ENCODE measurements at regions of chr6 and their contacts with region 1.

Region 1: GRCh38 chr6:24991810-24992467 is 56.2 kb upstream of the RIPOR2 start:
- DNase-seq: peak; percentile 61
- ATAC-seq: peak; percentile 88
- H3K4me3 Mint-ChIP-seq: no peak overlapping the region
- H3K27ac Mint-ChIP-seq: no peak overlapping the region
- H3K4me1 Mint-ChIP-seq: peaks cover 14% of the 10 kb centered on the region
- H3K27me3 Mint-ChIP-seq: peaks cover 2% of the 10 kb centered on the region; the same call in 1 of the 2 replicates
- CTCF ChIP-seq: peak; percentile 83

Region 2: DNA sequence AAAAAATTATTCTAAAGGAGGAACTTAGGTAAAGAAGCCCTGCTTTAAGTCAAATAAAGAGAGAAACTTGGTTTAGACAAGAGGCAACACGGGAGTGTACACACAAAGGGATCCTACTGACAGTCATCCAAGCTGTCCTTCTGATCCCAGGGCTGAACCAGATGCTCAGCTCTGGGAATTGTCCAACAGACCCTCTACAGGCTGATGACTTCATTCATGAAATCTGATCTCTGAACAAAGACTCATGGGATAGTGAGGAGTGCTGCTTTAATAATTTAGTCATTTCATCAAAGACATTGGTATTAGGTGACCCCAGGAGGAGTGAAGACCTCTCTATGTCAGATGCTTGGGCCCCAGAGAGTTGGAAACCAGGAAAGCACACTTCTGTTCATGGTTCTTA is 127.6 kb before region 1 on chr6:
- CTCF ChIA-PET with region 1: interaction called, 10 read pairs
- POLR2A ChIA-PET with region 1: no interaction called
- DNase-seq: no peak
- ATAC-seq: no peak
- H3K4me3 Mint-ChIP-seq: no peak overlapping the region
- H3K27ac Mint-ChIP-seq: no peak overlapping the region
- H3K4me1 Mint-ChIP-seq: peaks cover 8% of the 10 kb centered on the region
- H3K27me3 Mint-ChIP-seq: no peaks in the 10 kb centered on the region
- CTCF ChIP-seq: no peak

Region 3: DNA sequence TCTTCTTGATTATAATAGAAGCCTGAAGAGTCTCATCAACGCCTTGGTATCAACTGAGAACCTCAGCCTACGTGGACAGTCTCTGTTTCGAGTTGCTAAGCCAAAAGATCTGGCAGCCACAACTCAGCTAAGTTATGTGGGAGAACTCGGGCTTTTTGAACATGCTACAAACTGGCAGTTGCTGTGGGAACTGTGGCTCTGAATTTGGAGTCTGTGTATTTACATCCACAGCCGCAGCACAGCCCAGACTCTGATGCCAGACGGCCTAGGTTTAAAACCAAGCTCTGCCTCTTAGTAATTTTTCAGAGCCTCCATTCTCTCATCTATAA is 92.0 kb before region 1 on chr6:
- CTCF ChIA-PET with region 1: interaction called, 18 read pairs
- POLR2A ChIA-PET with region 1: no interaction called
- DNase-seq: no peak
- ATAC-seq: no peak
- H3K4me3 Mint-ChIP-seq: no peak overlapping the region
- H3K27ac Mint-ChIP-seq: no peak overlapping the region
- H3K4me1 Mint-ChIP-seq: peaks cover 23% of the 10 kb centered on the region
- H3K27me3 Mint-ChIP-seq: no peaks in the 10 kb centered on the region
- CTCF ChIP-seq: no peak

Region 4: GRCh38 chr6:24919004-24919892 is 72.7 kb before region 1 on chr6:
- CTCF ChIA-PET with region 1: interaction called, 27 read pairs
- POLR2A ChIA-PET with region 1: no interaction called
- DNase-seq: peak; percentile 18
- ATAC-seq: peak; percentile 32
- H3K4me3 Mint-ChIP-seq: no peak overlapping the region
- H3K27ac Mint-ChIP-seq: peak overlapping the region; percentile 80
- H3K4me1 Mint-ChIP-seq: peaks cover 50% of the 10 kb centered on the region
- H3K27me3 Mint-ChIP-seq: no peaks in the 10 kb centered on the region
- CTCF ChIP-seq: no peak

Region 5: DNA sequence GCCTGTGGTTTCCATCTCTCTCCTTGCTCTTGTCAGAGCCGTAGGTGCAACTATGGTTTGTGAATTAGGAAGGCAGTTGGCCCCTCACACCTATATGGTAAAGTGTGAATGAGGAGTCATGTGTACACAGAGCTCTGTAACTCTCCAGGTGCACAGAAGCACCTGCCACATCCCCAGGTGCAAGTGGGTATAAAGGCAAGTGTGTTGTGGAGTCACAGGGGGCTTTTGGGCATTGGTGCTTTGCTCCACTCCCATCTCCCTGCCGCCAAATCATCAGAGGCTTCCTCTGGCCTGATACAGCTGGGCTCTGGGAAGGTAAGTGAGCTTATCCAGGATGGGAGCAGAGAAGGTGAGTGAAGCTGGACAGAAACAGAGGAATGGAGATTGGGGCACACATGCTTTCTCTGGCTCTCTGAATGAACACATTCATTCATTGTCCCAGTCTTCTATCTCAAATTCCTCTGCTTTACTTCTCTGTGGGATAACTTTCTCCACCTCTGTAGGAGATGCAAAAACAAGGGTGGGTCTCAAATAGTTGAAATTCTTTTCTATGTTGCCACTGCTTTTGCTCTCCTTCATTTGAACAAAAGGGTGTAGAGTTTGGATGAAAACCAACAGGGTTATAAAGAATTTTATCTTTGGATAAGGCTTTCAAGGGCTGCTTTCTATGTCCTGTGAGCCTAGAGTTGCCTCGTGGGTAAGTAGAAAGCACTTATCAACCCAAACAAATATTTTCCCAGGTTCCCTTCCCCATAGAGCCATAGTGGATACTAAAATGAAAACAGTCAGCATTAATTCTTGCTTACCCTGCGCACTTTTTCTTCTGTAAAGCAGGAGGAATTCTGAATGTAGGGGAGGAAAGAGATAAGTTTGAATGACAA is 11.2 kb before region 1 on chr6:
- CTCF ChIA-PET with region 1: interaction called, 61 read pairs
- POLR2A ChIA-PET with region 1: no interaction called
- DNase-seq: peak; percentile 23
- ATAC-seq: peak; percentile 84
- H3K4me3 Mint-ChIP-seq: peak overlapping the region; percentile 34
- H3K27ac Mint-ChIP-seq: peak overlapping the region; percentile 100
- H3K4me1 Mint-ChIP-seq: peaks cover 86% of the 10 kb centered on the region
- H3K27me3 Mint-ChIP-seq: no peaks in the 10 kb centered on the region
- CTCF ChIP-seq: no peak

Region 6: GRCh38 chr6:25107218-25107617 is 115.3 kb after region 1 on chr6:
- CTCF ChIA-PET with region 1: no interaction called
- POLR2A ChIA-PET with region 1: no interaction called
- DNase-seq: no peak
- ATAC-seq: no peak
- H3K4me3 Mint-ChIP-seq: no peak overlapping the region
- H3K27ac Mint-ChIP-seq: no peak overlapping the region
- H3K4me1 Mint-ChIP-seq: peaks cover 10% of the 10 kb centered on the region
- H3K27me3 Mint-ChIP-seq: no peaks in the 10 kb centered on the region; the same call in 1 of the 2 replicates
- CTCF ChIP-seq: no peak

Measured in WTC11 (cell line).